ENCODE measurements at regions of chrX and their contacts with region 1.

Region 1: DNA sequence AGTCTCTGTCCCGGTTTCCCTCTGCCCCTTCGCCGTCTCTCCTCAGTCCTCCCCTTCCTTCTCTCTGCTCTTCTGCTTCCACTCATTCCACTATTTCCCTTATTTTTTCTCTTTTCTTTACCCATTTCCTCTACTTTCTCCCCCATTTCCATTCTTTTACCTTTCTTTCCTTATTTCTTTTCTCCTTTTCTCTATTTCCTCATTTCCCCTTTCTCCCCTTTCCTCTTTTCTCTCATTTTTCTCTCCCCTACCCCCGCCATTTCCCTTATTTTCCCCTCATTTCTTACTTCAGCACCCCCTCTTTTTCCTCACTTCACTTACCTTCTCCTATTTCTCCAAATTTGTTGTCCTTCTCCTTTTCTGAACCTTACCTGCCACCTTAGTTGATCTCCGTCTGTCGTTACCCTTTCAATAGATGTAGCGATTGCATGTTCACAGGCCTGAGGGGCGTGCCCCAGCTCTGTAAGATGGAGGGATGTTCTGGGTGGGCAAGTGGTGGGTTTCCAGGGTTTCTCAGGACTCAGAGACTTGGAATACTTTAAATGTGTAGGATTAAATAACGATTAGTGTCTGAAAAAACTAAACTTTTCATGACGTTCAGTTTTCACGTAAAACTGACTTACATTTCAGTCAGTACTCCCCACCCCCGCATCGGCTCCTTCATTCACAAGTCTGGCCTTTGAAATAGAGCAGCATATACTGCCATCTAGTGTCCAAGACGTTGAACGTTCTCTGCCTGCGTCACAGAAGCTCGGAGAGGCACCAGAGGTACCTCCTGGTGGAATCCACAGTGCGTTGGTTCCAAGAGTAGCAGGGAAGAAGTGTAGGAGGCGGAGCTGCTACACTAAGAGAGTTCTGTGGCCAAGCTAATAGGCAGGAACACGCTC is 641 bp upstream of the NCBP2L start:
- DNase-seq: peak; percentile 38 to 95
- H3K4me3 ChIP-seq: peak overlapping the region; percentile 44 to 81
- H3K27ac ChIP-seq: peak overlapping the region; percentile 82 to 88
- H3K4me1 ChIP-seq: no peaks in the 10 kb centered on the region
- H3K27me3 ChIP-seq: no peaks in the 10 kb centered on the region
- CTCF ChIP-seq: peak; percentile 75 to 78 (median 76)

Region 2: GRCh38 chrX:107562482-107562881 is 214.4 kb before region 1 on chrX:
- intact Hi-C with region 1: no loop called
- DNase-seq: no peak
- H3K4me3 ChIP-seq: no peak overlapping the region
- H3K27ac ChIP-seq: no peak overlapping the region
- H3K4me1 ChIP-seq: no peaks in the 10 kb centered on the region
- H3K27me3 ChIP-seq: no peaks in the 10 kb centered on the region
- CTCF ChIP-seq: no peak

Region 3: GRCh38 chrX:107627838-107628661 is 148.8 kb before region 1 on chrX and contains the start of gene PRPS1:
- intact Hi-C with region 1: loop called (anchors 1 kb)
- DNase-seq: peak; percentile 77 to 96
- H3K4me3 ChIP-seq: peak within 1 kb of the TSS; percentile 47 to 74
- H3K27ac ChIP-seq: peak within 1 kb of the TSS; percentile 77 to 86
- H3K4me1 ChIP-seq: no peaks in the 10 kb centered on the region
- H3K27me3 ChIP-seq: no peaks in the 10 kb centered on the region
- CTCF ChIP-seq: no peak
- total RNA-seq, gene PRPS1: 14.0 TPM

Region 4: GRCh38 chrX:107654872-107655761 is 121.8 kb before region 1 on chrX:
- intact Hi-C with region 1: loop called (anchors 1 kb)
- DNase-seq: peak; percentile 48 to 88
- H3K4me3 ChIP-seq: peak overlapping the region in 1 of 2 donors; percentile 36
- H3K27ac ChIP-seq: peak overlapping the region; percentile 48 to 63
- H3K4me1 ChIP-seq: peaks cover 0 to 3% of the 10 kb centered on the region in 2 donors
- H3K27me3 ChIP-seq: no peaks in the 10 kb centered on the region
- CTCF ChIP-seq: peak; percentile 56 to 71 (median 57)

Region 5: DNA sequence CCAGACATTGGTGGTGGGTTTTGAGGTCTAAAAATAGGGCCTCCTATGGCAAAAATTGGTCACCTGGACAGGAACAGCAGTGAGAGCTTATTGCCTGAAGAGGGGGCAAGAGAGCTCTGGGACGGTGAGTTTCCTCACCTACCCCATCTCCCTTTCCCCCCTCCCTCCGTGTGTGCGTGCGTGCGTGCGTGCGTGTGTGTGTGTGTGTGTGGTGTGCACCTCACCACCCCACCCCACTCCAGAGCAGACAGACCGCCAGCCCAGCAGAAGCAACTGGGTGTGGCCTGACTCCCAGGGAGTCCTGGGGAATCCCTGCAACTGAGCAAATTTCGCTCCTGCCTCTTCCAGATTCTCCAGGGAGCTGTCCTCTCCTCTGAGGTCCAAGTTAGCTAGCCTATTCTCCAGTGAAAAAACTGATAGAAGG is 103.9 kb before region 1 on chrX:
- intact Hi-C with region 1: loop called (anchors 1 kb)
- DNase-seq: peak; percentile 58 to 84
- H3K4me3 ChIP-seq: peak overlapping the region in 1 of 2 donors; percentile 4
- H3K27ac ChIP-seq: peak overlapping the region; percentile 90 to 95
- H3K4me1 ChIP-seq: peaks cover 2 to 23% of the 10 kb centered on the region in 2 donors
- H3K27me3 ChIP-seq: no peaks in the 10 kb centered on the region
- CTCF ChIP-seq: peak; percentile 49 to 63 (median 54)

Region 6: DNA sequence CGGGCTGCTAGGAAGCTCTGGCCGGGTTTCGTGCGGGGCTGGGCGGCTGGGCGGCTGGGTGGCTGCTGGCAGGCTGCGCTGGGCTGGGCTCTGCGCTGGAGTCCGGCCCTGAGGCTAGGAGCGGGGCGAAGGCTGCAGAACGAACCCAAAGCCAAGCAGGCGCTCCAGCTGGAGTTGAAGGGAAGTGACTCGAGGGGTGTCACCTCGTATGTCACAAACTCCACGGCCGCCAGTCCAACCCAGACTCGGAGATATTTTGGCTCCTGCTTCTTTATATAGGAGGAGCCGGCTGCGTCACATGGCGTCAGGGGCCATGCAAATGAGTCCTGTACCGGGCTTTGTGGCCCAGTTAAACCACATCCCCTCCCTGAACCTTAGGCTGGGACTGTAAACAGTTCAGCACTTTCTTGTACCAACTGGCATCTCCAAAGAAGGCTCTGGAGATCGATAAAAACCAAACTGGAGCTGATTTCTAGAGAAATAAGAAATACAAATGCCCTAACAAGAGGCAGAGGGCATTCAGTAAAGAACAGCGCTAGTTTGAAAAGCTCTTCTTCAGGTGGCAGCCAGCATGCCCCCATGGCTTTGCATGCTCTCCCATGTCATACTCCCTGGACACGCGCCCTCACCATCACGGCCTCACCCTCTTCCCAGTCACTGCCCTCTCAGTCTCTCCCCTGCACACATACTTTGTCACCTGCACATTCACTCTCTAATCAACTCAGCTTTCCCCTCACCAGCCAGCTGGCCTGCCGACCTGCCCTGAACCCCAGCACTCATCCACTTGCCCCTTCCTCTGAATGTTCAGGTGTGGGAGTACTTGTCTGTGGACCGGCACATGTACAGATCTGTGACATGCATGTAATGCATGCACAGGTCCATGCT is 59.8 kb before region 1 on chrX:
- intact Hi-C with region 1: loop called (anchors 2 kb)
- DNase-seq: peak; percentile 89 to 96
- H3K4me3 ChIP-seq: peak overlapping the region; percentile 74 to 87
- H3K27ac ChIP-seq: peak overlapping the region; percentile 96 to 97
- H3K4me1 ChIP-seq: peaks cover 0 to 4% of the 10 kb centered on the region in 2 donors
- H3K27me3 ChIP-seq: no peaks in the 10 kb centered on the region
- CTCF ChIP-seq: peak in 1 of 3 experiments; percentile 4

Region 7: GRCh38 chrX:107731831-107732502 is 44.9 kb before region 1 on chrX:
- intact Hi-C with region 1: loop called (anchors 2 kb)
- DNase-seq: peak; percentile 89 to 94
- H3K4me3 ChIP-seq: no peak overlapping the region
- H3K27ac ChIP-seq: peak overlapping the region; percentile 76 to 82
- H3K4me1 ChIP-seq: peaks cover 0 to 27% of the 10 kb centered on the region in 2 donors
- H3K27me3 ChIP-seq: no peaks in the 10 kb centered on the region
- CTCF ChIP-seq: no peak

Region 8: GRCh38 chrX:107814758-107815157 is 37.9 kb after region 1 on chrX:
- intact Hi-C with region 1: no loop called
- DNase-seq: no peak
- H3K4me3 ChIP-seq: no peak overlapping the region
- H3K27ac ChIP-seq: no peak overlapping the region
- H3K4me1 ChIP-seq: no peaks in the 10 kb centered on the region
- H3K27me3 ChIP-seq: no peaks in the 10 kb centered on the region
- CTCF ChIP-seq: no peak

Region 9: GRCh38 chrX:107826238-107827029 is 49.5 kb after region 1 on chrX:
- intact Hi-C with region 1: loop called (anchors 5 kb)
- DNase-seq: peak in 1 of 2 donors; percentile 65
- H3K4me3 ChIP-seq: peak overlapping the region; percentile 57 to 73
- H3K27ac ChIP-seq: peak overlapping the region; percentile 93 to 98
- H3K4me1 ChIP-seq: no peaks in the 10 kb centered on the region
- H3K27me3 ChIP-seq: peaks cover 4% of the 10 kb centered on the region
- CTCF ChIP-seq: no peak

Region 10: GRCh38 chrX:108261549-108262203 is 484.8 kb after region 1 on chrX:
- intact Hi-C with region 1: no loop called
- DNase-seq: no peak
- H3K4me3 ChIP-seq: no peak overlapping the region
- H3K27ac ChIP-seq: no peak overlapping the region
- H3K4me1 ChIP-seq: no peaks in the 10 kb centered on the region
- H3K27me3 ChIP-seq: no peaks in the 10 kb centered on the region
- CTCF ChIP-seq: no peak

Measured in ascending aorta (tissue), 2 donors.